CD4-positive, alpha-beta memory T cell (primary cell): ENCODE measurements at regions of chr19 and their contacts with region 1.

Region 1: DNA sequence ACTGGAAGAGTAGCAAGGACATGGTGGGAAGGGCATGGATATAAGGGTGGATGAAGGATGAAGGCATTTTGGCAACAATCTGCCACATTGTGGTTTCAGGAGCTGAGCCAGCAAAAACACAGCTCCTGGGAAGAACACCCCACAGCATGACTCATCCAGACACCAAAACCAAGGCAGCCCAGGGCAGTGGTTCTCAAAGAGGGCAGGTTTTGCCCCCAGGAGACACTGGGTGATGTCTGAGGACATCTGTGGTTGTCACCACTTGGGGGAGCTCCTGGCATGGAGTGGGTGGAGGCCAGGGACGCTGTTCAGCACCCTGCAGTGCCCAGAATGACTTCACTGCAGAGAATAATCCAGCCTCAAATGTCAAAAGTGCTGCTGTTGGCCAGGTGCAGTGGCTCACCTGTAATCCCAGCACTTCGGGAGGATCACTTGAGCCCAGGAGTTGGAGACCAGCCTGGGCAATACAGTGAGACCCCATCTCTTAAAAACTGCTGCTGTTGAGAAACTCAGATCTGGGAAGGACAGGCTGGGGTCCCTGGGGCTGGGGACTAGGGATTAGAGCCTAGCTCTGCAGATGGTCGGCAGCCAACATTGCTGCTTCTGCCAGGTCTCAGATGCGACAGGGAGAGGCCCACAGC is 16.1 kb downstream of the ZFR2 start:
- DNase-seq: peak in 2 of 5 donors; percentile 19 to 20
- H3K4me3 ChIP-seq: no peak overlapping the region
- H3K4me3 Mint-ChIP-seq: no peak overlapping the region
- H3K27ac ChIP-seq: no peak overlapping the region
- H3K27ac Mint-ChIP-seq: peak overlapping the region in 1 of 7 donors; percentile 68
- H3K4me1 ChIP-seq: no peaks in the 10 kb centered on the region
- H3K4me1 Mint-ChIP-seq: peaks cover 0 to 2% (median 0%) of the 10 kb centered on the region in 4 donors
- H3K27me3 ChIP-seq: no peaks in the 10 kb centered on the region
- H3K27me3 Mint-ChIP-seq: no peaks in the 10 kb centered on the region

Region 2: GRCh38 chr19:4208385-4209094 is 355.8 kb after region 1 on chr19:
- CTCF ChIA-PET with region 1: interaction called, 4 read pairs
- POLR2A ChIA-PET with region 1: no interaction called
- intact Hi-C with region 1: loop called (anchors 10 kb)
- DNase-seq: no peak
- H3K4me3 ChIP-seq: no peak overlapping the region
- H3K4me3 Mint-ChIP-seq: no peak overlapping the region
- H3K27ac ChIP-seq: no peak overlapping the region
- H3K27ac Mint-ChIP-seq: no peak overlapping the region
- H3K4me1 ChIP-seq: no peaks in the 10 kb centered on the region
- H3K4me1 Mint-ChIP-seq: peaks cover 3 to 5% (median 3%) of the 10 kb centered on the region in 4 donors
- H3K27me3 ChIP-seq: no peaks in the 10 kb centered on the region
- H3K27me3 Mint-ChIP-seq: peaks cover 0 to 5% of the 10 kb centered on the region in 2 donors